ENCODE measurements at regions of chr3 and their contacts with region 1.

Region 1: DNA sequence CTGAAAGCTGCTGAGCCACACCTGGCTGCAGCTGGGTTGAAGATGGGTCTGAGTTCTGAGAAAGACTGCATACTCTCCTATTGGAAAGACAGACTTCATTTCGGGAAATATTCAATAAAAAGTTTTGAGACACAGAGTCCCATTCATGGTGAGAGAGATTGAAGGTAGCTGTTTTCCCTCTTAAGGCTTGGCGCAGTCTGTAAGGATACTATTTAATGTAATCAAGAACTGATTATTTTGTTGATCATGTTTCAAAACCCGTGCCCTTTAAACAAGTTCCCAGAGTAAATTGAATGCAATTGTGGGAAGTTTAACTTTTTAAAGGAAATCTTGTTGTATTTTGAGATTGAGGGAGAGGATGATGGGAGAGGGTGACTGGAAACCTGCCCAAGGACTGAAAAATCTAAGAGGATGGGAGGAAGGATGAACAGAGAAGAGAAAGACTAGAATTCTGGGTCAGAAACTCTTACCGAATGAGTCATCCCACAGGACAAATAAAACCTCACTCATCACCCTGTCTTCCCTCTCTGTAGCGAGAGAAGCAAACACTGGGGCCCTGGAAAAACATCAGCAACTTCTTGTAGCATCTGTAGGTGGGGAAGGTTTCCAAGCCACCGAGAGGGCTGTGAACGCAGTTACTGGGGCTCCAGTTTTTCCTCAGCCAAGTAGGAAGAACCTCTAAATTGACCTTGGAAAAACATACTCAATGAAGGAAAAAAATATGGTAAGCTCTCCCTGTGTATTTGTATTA is 193.2 kb upstream of the TPRG1 start:
- DNase-seq: no peak

Region 2: DNA sequence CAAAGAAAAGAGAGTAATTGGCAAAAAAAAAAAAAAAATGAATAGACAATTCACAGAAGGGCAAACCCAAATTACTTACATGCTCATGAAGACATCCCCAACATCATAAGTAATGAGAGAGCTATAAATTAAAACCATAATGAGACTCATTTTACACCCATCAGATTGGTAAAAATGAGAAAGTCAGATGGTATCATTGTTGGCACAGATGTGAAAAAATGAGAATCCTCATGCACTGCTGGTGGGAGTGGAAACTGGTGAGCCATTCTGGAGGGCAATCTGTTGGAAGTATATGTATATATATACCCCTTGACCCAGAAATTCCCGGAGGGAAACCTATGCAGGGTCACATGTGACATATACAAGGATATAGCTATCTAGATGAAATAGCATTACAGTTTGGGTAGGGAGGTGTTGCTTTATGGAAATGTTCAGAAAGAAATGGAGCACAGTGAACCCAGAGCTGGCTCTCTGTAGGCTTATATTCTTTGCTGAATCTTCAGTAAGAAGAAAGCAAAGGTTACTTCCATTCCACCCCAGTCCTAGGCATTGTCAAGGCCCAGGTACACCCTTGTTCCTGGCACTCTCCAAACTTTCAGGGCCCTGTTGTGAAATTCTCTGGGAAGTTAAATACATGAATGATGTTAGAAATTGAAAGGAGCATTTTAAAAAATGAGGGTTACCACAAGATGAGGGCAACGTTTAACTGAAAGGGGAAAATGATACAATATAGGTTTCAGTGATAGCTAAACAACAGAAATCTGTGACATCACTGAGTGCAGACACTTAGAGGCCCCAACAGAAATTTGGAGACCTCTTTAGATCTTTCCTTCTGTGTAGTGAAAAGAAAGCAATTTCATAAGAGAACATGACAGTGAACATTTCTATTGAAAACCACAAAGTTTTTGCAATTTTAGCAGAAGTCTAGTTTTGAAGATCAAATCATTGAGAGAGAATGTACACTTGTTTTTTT is 60.5 kb after region 1 on chr3:
- intact Hi-C with region 1: no loop called
- DNase-seq: no peak

Region 3: DNA sequence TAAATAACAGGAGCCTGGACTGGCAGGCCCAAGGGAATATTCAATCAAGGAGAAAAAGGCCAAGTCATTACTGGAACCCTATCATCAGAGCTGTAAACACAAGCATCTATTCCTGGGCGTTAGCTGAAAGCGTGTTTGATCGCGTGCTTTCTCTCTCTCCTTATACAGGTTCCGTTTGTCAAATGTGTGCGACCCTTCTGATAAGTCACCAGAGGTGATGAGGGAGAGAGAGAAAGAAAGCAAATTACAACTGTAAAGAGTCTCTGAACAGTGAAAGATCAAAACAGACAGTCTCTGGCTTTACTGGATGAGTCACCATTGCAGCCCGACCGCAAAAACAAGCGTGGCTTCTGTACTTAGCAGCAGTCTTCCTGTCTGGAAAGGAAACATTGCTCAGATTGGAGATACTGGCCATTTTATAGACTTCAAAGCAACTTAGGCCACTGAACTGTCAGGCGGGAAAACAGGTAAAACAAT is 153.7 kb after region 1 on chr3:
- intact Hi-C with region 1: loop called (anchors 10 kb)
- DNase-seq: peak in 2 of 42 donors; percentile 7 to 22

Region 4: DNA sequence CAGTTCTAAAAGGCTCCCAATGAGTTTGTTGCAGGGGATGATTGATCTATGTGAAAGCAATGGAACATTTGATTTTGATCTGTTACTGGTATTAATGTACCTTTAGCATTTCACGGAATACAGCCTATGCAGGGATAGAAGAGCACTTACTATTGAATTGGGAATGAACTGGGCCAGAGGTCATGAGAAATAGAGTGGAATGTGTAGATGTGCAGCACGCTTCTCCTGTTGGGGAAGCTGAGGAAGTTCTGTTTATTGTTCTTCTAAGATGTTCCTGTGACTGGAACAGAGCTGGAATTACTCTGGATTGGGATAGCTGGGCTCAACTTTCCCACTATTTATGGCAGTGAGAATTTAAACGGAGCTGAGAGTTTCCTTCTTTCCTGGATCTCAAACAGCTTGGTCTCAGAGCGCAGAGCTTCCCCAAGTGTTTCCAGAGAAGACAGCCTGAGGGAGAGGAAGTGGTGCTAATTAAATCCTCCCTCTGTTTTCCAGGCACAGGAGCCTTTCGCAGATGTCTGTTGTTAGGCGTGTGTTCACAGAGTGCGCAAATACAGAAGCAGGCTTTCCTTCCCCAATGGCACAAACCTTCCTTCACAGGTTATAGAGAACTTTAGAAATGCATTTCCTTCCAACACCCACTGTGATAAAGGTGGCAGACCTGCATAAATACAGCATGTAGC is 225.7 kb after region 1 on chr3:
- intact Hi-C with region 1: no loop called
- DNase-seq: peak in 3 of 42 donors; percentile 10 to 22 (median 10)

Measured in head of caudate nucleus (tissue), 42 donors.